Activated naive CD4-positive, alpha-beta T cell treated with anti-CD3 and anti-CD28 coated beads, Interleukin-2, amount 10 ng/mL, durations not matched to agents 7 days and 5 days (primary cell): ENCODE measurements at regions of chr7 and their contacts with region 1.

Region 1: DNA sequence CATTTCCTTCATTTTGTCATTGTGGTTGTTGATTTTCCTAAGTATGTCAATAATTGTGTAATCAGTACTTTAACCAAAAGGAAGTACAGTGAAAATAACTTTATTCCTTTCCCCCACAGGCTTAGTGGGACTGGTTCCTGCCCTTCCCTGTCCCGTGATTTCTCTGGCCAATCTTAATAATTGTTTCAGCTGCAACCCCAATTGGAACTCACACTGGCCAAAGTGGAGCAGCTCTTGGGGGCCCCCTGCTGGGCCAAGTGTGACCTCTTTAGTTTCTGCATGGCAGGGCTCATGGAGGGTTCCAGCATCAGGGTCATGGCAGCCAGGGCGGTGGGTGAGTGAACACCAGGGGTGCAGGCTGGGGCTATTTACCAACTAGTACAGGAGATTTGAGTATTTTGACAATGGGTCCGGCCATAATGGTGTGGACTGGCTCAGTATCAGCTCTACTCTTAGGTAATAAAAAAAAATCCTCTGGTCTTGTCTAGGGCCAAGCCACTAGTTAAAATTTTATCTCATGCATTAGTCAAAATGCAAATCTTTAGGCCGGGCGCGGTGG is 31.7 kb downstream of the CYCS start:
- DNase-seq: peak; percentile 86
- H3K4me3 Mint-ChIP-seq: no peak overlapping the region
- H3K27ac Mint-ChIP-seq: no peak overlapping the region
- H3K4me1 Mint-ChIP-seq: peaks cover 9% of the 10 kb centered on the region
- H3K27me3 Mint-ChIP-seq: peaks cover 13% of the 10 kb centered on the region

Region 2: GRCh38 chr7:24819916-24820689 is 273.2 kb before region 1 on chr7:
- CTCF ChIA-PET with region 1: interaction called, 18 read pairs
- DNase-seq: peak; percentile 83
- H3K4me3 Mint-ChIP-seq: peak overlapping the region; percentile 60
- H3K27ac Mint-ChIP-seq: peak overlapping the region; percentile 98
- H3K4me1 Mint-ChIP-seq: peaks cover 58% of the 10 kb centered on the region
- H3K27me3 Mint-ChIP-seq: no peaks in the 10 kb centered on the region

Region 3: GRCh38 chr7:24825931-24826661 is 267.3 kb before region 1 on chr7:
- CTCF ChIA-PET with region 1: interaction called, 18 read pairs
- DNase-seq: peak; percentile 29
- H3K4me3 Mint-ChIP-seq: peak overlapping the region; percentile 33
- H3K27ac Mint-ChIP-seq: peak overlapping the region; percentile 87
- H3K4me1 Mint-ChIP-seq: peaks cover 87% of the 10 kb centered on the region
- H3K27me3 Mint-ChIP-seq: no peaks in the 10 kb centered on the region

Region 4: DNA sequence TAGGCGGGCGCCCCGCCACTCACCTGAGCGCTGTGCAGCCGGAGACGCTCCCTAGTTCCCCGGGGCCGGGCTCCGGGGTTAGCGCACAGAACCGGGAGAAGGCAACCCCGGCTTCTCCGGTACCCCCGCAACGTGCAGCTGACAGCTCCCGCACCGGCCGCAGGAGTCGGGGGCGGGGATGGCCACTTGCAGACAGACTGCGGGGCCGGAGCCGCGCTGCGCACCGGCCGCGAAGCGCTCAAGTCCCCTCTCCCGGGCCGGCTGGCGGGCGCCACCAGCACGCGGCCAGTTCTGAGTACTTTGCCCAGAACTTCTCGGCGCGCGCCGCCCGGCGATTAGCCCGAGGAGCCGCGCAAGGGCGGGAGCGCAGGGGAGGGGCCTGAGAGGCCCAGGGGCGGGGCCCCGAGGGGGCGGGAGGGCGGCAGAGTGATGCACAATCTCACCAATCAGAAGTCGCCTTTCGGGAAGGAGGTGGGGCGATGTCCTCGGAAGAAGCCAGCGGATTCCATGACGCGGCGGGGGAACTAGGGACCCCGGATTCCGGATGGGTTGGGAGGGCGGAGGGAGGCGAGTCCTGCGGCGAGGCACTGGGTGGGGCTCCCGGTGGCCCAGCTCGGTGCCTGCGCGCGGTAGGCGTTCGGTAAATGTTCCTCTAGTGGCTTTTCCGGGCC is 113.3 kb before region 1 on chr7 and contains the start of gene OSBPL3:
- CTCF ChIA-PET with region 1: interaction called, 33 read pairs
- DNase-seq: peak; percentile 97
- H3K4me3 Mint-ChIP-seq: peak within 1 kb of the TSS; percentile 85
- H3K27ac Mint-ChIP-seq: peak within 1 kb of the TSS; percentile 92
- H3K4me1 Mint-ChIP-seq: peaks cover 62% of the 10 kb centered on the region
- H3K27me3 Mint-ChIP-seq: peaks cover 19% of the 10 kb centered on the region

Region 5: GRCh38 chr7:25069900-25070443 is 23.4 kb before region 1 on chr7:
- CTCF ChIA-PET with region 1: interaction called, 11 read pairs
- DNase-seq: peak; percentile 65
- H3K4me3 Mint-ChIP-seq: no peak overlapping the region
- H3K27ac Mint-ChIP-seq: no peak overlapping the region
- H3K4me1 Mint-ChIP-seq: peaks cover 11% of the 10 kb centered on the region
- H3K27me3 Mint-ChIP-seq: peaks cover 13% of the 10 kb centered on the region